ENCODE measurements at regions of chr10 and their contacts with region 1.

Region 1: DNA sequence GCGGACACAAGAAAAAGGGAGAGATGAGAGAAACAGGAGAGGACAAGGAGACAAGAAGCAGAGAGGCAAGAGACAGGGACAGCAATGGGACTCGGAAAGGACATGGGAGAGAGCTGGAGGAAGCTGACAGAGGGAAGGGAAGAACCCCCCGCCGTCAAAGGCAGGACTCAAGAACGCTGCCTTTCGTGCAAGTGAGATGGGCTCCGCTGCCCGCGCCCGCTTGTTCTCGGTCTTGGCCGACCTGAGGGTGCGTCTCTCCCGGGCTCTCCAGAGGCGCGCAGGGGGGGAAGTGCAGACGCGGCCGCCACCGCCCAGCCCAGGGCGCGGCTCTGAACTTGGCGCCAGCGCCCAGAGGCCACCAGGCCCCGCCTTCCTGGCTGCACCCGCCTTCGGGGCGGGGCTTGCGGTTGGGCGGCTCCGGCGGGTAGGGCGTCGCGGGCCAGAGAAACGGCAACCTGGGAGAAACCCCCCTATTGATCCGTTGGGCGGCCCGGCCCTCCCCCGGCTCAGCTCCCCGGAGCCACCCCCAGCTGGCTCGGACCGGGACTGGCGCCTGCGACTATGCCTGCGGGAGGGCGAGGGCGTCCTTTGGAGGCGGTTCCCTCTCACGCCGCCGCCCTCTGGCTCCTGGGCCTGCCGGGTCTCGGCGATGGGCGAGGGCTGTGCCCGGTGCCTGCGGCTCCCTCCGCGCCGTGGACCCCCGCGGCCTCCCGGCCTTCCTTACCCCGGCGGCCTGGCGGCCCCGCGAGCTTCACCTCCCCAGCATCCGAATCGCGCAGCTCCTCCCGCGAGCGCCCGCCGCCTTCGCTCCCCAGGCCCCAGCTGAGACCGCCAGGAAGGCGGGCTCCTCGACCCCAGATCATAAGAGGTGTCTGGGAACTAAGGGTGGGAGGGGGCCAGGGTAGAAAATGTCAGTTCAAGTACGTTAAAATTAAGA is 2.2 kb upstream of the ANTXRL start:
- DNase-seq: peak; percentile 93
- ATAC-seq: peak; percentile 95

Region 2: DNA sequence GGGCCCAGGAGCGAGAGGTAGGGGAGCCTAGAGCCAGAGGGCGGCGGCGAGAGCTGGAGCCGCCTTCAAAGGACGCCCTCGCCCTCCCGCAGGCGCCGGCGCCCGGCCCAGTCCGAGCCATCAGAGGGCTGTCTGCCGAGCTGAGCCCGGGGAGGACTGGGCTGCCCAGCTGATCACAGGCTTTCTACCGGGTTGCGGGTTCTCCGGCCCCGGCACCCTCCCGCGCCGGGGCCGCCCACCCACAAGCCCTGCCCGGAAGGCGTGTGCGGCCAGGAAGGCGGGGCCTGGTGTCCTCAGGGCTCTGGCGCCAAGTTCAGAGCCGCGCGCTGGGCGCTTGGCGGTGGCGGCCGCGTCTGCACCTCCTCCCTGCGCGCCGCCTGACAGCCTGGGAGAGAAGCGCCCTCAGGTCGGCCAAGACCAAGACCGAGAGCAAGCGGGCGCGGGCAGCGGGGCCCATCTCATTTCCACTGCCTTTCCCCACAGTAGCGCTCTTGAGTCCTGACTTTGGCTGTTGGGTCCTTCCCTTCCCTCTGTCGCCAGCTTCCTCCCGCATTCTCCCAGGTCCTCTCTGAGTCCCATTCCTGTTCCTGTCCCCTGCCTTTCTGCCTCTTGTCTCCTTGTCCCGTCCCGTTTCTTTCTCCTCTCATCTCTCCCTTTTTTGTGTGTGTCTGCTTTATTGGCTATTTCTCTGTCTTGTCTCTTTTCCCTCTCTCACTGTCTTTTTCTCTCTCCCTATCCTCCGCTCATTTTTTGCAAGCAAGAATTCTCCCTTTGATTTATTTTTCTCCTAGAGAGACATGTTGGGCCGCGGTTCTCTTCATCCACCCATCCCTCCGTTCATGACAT is 177.9 kb before region 1 on chr10:
- intact Hi-C with region 1: loop called (anchors 2 kb)
- DNase-seq: peak; percentile 78
- ATAC-seq: peak; percentile 99

Measured in Right ventricle myocardium superior (tissue), 1 donor.